ENCODE measurements at regions of chr16 and their contacts with region 1.

Region 1: GRCh38 chr16:4402439-4403132 is 13.8 kb downstream of the CORO7 start:
- DNase-seq: peak; percentile 68 to 74
- ATAC-seq: peak; percentile 55 to 61 (median 57)
- H3K4me3 ChIP-seq: no peak overlapping the region
- H3K4me3 Mint-ChIP-seq: no peak overlapping the region
- H3K27ac ChIP-seq: no peak overlapping the region
- H3K27ac Mint-ChIP-seq: peak overlapping the region in 1 of 2 donors; percentile 39
- H3K4me1 ChIP-seq: peaks cover 8% of the 10 kb centered on the region
- H3K4me1 Mint-ChIP-seq: peaks cover 11 to 38% of the 10 kb centered on the region in 2 donors
- H3K27me3 ChIP-seq: no peaks in the 10 kb centered on the region
- H3K27me3 Mint-ChIP-seq: no peaks in the 10 kb centered on the region
- CTCF ChIP-seq: peak; percentile 76

Region 2: GRCh38 chr16:3076577-3076976 is 1326.0 kb before region 1 on chr16:
- intact Hi-C with region 1: no loop called
- DNase-seq: peak in 1 of 2 donors; percentile 35
- ATAC-seq: no peak
- H3K4me3 ChIP-seq: peak overlapping the region; percentile 6
- H3K4me3 Mint-ChIP-seq: peak overlapping the region; percentile 74
- H3K27ac ChIP-seq: peak overlapping the region; percentile 86
- H3K27ac Mint-ChIP-seq: peak overlapping the region; percentile 91 to 97
- H3K4me1 ChIP-seq: peaks cover 79% of the 10 kb centered on the region
- H3K4me1 Mint-ChIP-seq: peaks cover 78 to 84% of the 10 kb centered on the region in 2 donors
- H3K27me3 ChIP-seq: no peaks in the 10 kb centered on the region
- H3K27me3 Mint-ChIP-seq: no peaks in the 10 kb centered on the region
- CTCF ChIP-seq: no peak

Region 3: GRCh38 chr16:4288148-4288921 is 114.3 kb before region 1 on chr16:
- intact Hi-C with region 1: loop called (anchors 5 kb)
- DNase-seq: peak; percentile 77 to 90
- ATAC-seq: peak; percentile 89 to 98 (median 97)
- H3K4me3 ChIP-seq: no peak overlapping the region
- H3K4me3 Mint-ChIP-seq: no peak overlapping the region
- H3K27ac ChIP-seq: no peak overlapping the region
- H3K27ac Mint-ChIP-seq: no peak overlapping the region
- H3K4me1 ChIP-seq: peaks cover 7% of the 10 kb centered on the region
- H3K4me1 Mint-ChIP-seq: peaks cover 4 to 10% of the 10 kb centered on the region in 2 donors
- H3K27me3 ChIP-seq: peaks cover 2% of the 10 kb centered on the region
- H3K27me3 Mint-ChIP-seq: peaks cover 5 to 28% of the 10 kb centered on the region in 2 donors
- CTCF ChIP-seq: peak; percentile 98

Region 4: GRCh38 chr16:4358831-4359561 is 43.6 kb before region 1 on chr16:
- intact Hi-C with region 1: loop called (anchors 1 kb)
- DNase-seq: peak; percentile 67 to 80
- ATAC-seq: peak; percentile 75 to 85 (median 77)
- H3K4me3 ChIP-seq: no peak overlapping the region
- H3K4me3 Mint-ChIP-seq: peak overlapping the region; percentile 13
- H3K27ac ChIP-seq: no peak overlapping the region
- H3K27ac Mint-ChIP-seq: peak overlapping the region; percentile 50 to 61
- H3K4me1 ChIP-seq: peaks cover 8% of the 10 kb centered on the region
- H3K4me1 Mint-ChIP-seq: peaks cover 0 to 7% of the 10 kb centered on the region in 2 donors
- H3K27me3 ChIP-seq: no peaks in the 10 kb centered on the region
- H3K27me3 Mint-ChIP-seq: no peaks in the 10 kb centered on the region
- CTCF ChIP-seq: peak; percentile 83

Region 5: GRCh38 chr16:4709481-4709880 is 306.9 kb after region 1 on chr16:
- intact Hi-C with region 1: no loop called
- DNase-seq: no peak
- ATAC-seq: no peak
- H3K4me3 ChIP-seq: no peak overlapping the region
- H3K4me3 Mint-ChIP-seq: no peak overlapping the region
- H3K27ac ChIP-seq: no peak overlapping the region
- H3K27ac Mint-ChIP-seq: no peak overlapping the region
- H3K4me1 ChIP-seq: no peaks in the 10 kb centered on the region
- H3K4me1 Mint-ChIP-seq: no peaks in the 10 kb centered on the region
- H3K27me3 ChIP-seq: no peaks in the 10 kb centered on the region
- H3K27me3 Mint-ChIP-seq: no peaks in the 10 kb centered on the region
- CTCF ChIP-seq: no peak

Measured in natural killer cell (primary cell).